ENCODE measurements at regions of chr10 and their contacts with region 1.

Region 1: GRCh38 chr10:101782811-101783735 is at the start of gene NPM3:
- DNase-seq: peak; percentile 91
- H3K4me3 ChIP-seq: peak within 1 kb of the TSS; percentile 54
- H3K27ac ChIP-seq: peak within 1 kb of the TSS; percentile 8
- H3K4me1 ChIP-seq: peaks cover 20% of the 10 kb centered on the region
- H3K27me3 ChIP-seq: no peaks in the 10 kb centered on the region
- CTCF ChIP-seq: no peak
- total RNA-seq, gene NPM3: 14.6 to 73.6 TPM

Region 2: DNA sequence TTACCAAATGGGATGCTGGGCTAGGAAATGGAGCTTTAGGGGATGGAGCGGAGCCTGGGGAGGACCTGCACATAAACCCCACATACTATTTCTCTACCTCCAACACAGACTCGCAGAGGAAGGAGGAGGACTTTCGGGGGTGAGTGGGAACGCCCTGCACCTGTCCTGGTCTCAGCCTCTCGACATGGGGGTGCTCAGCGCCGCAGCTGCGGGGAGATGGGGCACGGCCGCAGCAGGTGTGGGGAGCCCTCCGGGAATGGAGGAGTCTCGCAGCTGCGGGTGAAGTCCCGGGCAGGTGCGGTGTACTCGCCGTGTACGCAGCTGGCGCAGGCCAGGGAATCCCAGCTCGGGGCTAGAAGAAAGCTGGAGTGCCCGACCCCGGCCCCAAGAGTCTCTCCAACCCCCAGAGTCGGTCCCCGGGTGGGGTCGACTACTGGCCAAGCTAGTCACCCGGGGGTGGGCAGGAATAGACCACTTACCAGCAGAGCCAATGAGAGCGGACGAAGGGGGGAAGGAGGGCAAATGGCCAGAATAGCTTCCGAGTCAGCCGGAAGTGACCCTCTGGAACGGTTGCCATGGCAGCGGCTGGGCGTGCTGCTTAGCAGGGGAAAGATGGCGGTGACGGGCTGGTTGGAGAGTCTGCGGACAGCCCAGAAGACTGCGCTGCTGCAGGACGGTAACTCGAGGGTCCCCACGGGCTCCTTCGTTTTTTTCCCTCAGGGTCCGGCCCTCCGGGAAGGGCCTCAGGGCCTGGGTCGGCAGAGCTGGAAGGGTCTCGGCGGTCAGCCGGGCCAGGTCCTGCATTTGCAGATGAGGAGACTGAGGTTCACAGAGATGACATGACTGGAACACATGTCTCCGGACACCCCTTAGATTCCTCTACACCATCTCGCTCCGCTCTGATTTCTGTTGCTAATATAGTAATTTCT is 195.1 kb before region 1 on chr10 and contains the starts of genes DPCD and POLL:
- intact Hi-C with region 1: loop called (anchors 5 kb)
- DNase-seq: peak; percentile 98
- H3K4me3 ChIP-seq: peak within 1 kb of the TSS; percentile 95
- H3K27ac ChIP-seq: peak within 1 kb of the TSS; percentile 23
- H3K4me1 ChIP-seq: peaks cover 4% of the 10 kb centered on the region
- H3K27me3 ChIP-seq: no peaks in the 10 kb centered on the region
- CTCF ChIP-seq: no peak
- total RNA-seq, gene DPCD: 19.2 to 19.4 TPM
- total RNA-seq, gene POLL: 23.3 to 33.9 TPM

Region 3: GRCh38 chr10:101602761-101603398 is 180.2 kb before region 1 on chr10:
- intact Hi-C with region 1: loop called (anchors 5 kb)
- DNase-seq: peak; percentile 69
- H3K4me3 ChIP-seq: no peak overlapping the region
- H3K27ac ChIP-seq: no peak overlapping the region
- H3K4me1 ChIP-seq: no peaks in the 10 kb centered on the region
- H3K27me3 ChIP-seq: no peaks in the 10 kb centered on the region
- CTCF ChIP-seq: peak; percentile 84

Region 4: DNA sequence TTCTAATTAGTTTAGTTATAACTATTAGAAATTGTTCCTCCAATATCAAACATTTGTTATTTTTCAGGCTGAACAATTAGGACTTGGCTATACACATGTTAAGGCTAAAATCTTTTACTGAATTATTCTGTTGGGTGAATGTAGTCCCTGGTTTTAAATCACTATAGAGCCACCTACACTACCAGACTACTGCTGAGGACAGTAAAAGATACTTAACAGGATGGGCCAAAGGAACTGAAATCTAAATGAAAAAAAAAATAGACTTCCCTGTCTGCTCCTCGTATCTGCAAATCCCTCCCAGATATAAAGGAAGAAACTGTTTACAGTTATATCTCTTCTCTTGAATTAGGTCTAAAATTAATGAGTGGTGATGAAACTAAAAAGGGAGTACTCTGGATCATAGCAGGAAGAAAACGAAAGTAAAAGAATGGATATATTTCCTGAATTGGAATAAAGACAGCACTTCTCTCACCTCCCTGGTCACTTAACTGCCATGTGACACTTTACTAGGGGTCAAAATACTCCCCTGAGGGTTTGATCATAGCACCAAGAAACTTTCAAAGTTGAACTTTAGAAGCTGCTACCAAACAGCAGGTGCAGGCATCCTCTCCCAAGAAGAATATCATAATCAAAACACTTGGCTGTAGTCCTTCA is 100.8 kb before region 1 on chr10:
- intact Hi-C with region 1: no loop called
- DNase-seq: no peak
- H3K4me3 ChIP-seq: no peak overlapping the region
- H3K27ac ChIP-seq: no peak overlapping the region
- H3K4me1 ChIP-seq: no peaks in the 10 kb centered on the region
- H3K27me3 ChIP-seq: no peaks in the 10 kb centered on the region
- CTCF ChIP-seq: no peak